CD8-positive, alpha-beta T cell (primary cell): ENCODE measurements at regions of chr1 and their contacts with region 1.

Region 1: GRCh38 chr1:158998781-158999161 is 10.9 kb upstream of the IFI16 start:
- DNase-seq: peak in 7 of 9 experiments; percentile 13 to 82 (median 38)
- ATAC-seq: peak; percentile 85
- H3K4me3 ChIP-seq: no peak overlapping the region
- H3K4me3 Mint-ChIP-seq: peak overlapping the region; percentile 54
- H3K27ac ChIP-seq: no peak overlapping the region
- H3K27ac Mint-ChIP-seq: peak overlapping the region; percentile 61
- H3K4me1 ChIP-seq: peaks cover 6% of the 10 kb centered on the region
- H3K4me1 Mint-ChIP-seq: peaks cover 30% of the 10 kb centered on the region
- H3K27me3 ChIP-seq: no peaks in the 10 kb centered on the region
- H3K27me3 Mint-ChIP-seq: no peaks in the 10 kb centered on the region
- CTCF ChIP-seq: peak; percentile 91

Region 2: GRCh38 chr1:157963713-157964112 is 1035.1 kb before region 1 on chr1:
- CTCF ChIA-PET with region 1: no interaction called
- POLR2A ChIA-PET with region 1: no interaction called
- intact Hi-C with region 1: loop called in 1 of 2 experiments (anchors 10 kb)
- DNase-seq: peak; percentile 2 to 69 (median 44)
- ATAC-seq: peak; percentile 40
- H3K4me3 ChIP-seq: no peak overlapping the region
- H3K4me3 Mint-ChIP-seq: no peak overlapping the region
- H3K27ac ChIP-seq: no peak overlapping the region
- H3K27ac Mint-ChIP-seq: no peak overlapping the region
- H3K4me1 ChIP-seq: no peaks in the 10 kb centered on the region
- H3K4me1 Mint-ChIP-seq: no peaks in the 10 kb centered on the region
- H3K27me3 ChIP-seq: peaks cover 2% of the 10 kb centered on the region in 2 experiments
- H3K27me3 Mint-ChIP-seq: peaks cover 27% of the 10 kb centered on the region
- CTCF ChIP-seq: peak; percentile 68

Region 3: DNA sequence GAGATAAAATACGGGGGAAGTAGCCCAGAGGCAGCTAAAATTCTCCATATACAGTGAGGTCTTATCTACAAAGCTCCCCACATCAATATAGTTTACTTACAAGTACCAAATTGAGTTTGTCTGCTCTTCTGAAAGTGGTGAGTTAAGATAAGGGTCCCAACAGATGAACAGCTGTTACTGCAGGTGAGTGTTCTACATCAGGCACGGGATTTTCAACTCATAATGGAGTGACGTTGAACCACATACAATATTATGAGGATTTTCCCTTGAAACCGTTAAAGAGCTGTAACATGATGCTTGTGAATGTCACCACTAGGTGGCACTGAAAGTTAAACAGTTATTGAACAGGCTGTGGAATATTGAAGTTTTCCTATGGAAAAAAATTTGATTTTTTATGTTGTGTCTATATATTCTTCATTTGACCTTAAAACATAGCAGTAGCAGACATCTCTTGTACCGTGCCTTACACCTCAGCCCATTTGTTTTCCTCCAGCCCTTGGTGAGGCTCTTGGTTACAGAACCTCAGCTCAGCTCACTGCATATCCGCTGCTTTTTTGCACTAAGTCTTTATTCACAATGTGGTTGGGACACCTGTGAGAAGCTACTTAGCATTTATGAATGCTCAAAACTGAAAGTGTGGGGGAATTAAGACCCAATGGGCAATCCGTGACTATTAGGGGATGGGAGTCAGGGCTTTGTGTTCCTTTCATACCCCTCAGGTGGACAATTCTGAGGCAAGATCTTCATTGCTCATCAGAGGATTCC is 794.9 kb before region 1 on chr1:
- CTCF ChIA-PET with region 1: interaction called, 21 read pairs
- POLR2A ChIA-PET with region 1: no interaction called
- intact Hi-C with region 1: loop called (anchors 1 kb)
- DNase-seq: peak in 2 of 9 experiments; percentile 57 to 71
- ATAC-seq: peak; percentile 64
- H3K4me3 ChIP-seq: no peak overlapping the region
- H3K4me3 Mint-ChIP-seq: no peak overlapping the region
- H3K27ac ChIP-seq: no peak overlapping the region
- H3K27ac Mint-ChIP-seq: no peak overlapping the region
- H3K4me1 ChIP-seq: peaks cover 4% of the 10 kb centered on the region
- H3K4me1 Mint-ChIP-seq: peaks cover 12% of the 10 kb centered on the region
- H3K27me3 ChIP-seq: no peaks in the 10 kb centered on the region
- H3K27me3 Mint-ChIP-seq: peaks cover 8% of the 10 kb centered on the region
- CTCF ChIP-seq: peak; percentile 97

Region 4: DNA sequence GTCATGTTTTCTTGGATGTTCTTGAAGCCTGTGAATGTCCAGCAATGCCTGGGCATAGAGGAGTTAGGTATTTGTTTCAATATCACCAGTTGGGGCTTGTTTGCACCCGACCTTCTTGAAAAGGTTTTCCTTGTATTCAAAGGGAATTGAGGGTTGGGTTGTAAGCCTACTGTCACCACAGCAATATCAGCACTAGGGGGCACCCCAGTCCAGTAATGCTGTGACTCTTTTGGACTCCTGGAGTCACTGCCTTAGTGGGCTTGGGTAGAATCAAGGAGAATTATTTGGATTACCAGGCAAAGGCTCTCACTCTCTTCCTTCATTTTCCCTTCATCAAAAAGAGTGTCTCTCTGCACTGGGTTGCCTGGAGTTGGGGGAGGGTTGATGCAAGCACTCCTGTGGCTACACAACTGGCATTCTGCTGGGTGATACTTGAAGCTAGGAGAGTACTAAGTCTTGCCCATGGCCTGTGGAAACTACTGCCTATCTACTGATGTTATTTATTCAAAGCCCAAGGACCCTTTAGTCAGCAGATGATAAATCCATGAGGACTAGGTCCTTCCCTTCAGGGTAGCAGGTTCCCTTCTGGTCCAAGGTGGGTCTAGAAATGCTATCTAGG is 492.3 kb before region 1 on chr1:
- CTCF ChIA-PET with region 1: no interaction called
- POLR2A ChIA-PET with region 1: no interaction called
- intact Hi-C with region 1: loop called in 1 of 2 experiments (anchors 5 kb)
- DNase-seq: peak in 6 of 9 experiments; percentile 2 to 53 (median 26)
- ATAC-seq: no peak
- H3K4me3 ChIP-seq: no peak overlapping the region
- H3K4me3 Mint-ChIP-seq: no peak overlapping the region
- H3K27ac ChIP-seq: no peak overlapping the region
- H3K27ac Mint-ChIP-seq: peak overlapping the region; percentile 20
- H3K4me1 ChIP-seq: no peaks in the 10 kb centered on the region
- H3K4me1 Mint-ChIP-seq: no peaks in the 10 kb centered on the region
- H3K27me3 ChIP-seq: peaks cover 0 to 1% of the 10 kb centered on the region in 2 experiments
- H3K27me3 Mint-ChIP-seq: peaks cover 14% of the 10 kb centered on the region
- CTCF ChIP-seq: peak; percentile 24

Region 5: GRCh38 chr1:158793604-158794003 is 205.2 kb before region 1 on chr1:
- CTCF ChIA-PET with region 1: interaction called, 20 read pairs
- POLR2A ChIA-PET with region 1: no interaction called
- intact Hi-C with region 1: loop called (anchors 1 to 2 kb)
- DNase-seq: peak in 5 of 9 experiments; percentile 7 to 61 (median 39)
- ATAC-seq: peak; percentile 38
- H3K4me3 ChIP-seq: no peak overlapping the region
- H3K4me3 Mint-ChIP-seq: no peak overlapping the region
- H3K27ac ChIP-seq: no peak overlapping the region
- H3K27ac Mint-ChIP-seq: no peak overlapping the region
- H3K4me1 ChIP-seq: no peaks in the 10 kb centered on the region
- H3K4me1 Mint-ChIP-seq: no peaks in the 10 kb centered on the region
- H3K27me3 ChIP-seq: no peaks in the 10 kb centered on the region
- H3K27me3 Mint-ChIP-seq: peaks cover 8% of the 10 kb centered on the region
- CTCF ChIP-seq: no peak

Region 6: GRCh38 chr1:159009704-159010361 is 11.1 kb after region 1 on chr1 and contains the start of gene IFI16:
- CTCF ChIA-PET with region 1: interaction called, 11 read pairs
- POLR2A ChIA-PET with region 1: interaction called, 8 read pairs
- intact Hi-C with region 1: loop called in 1 of 2 experiments (anchors 1 kb)
- DNase-seq: peak in 8 of 9 experiments; percentile 27 to 87 (median 57)
- ATAC-seq: peak; percentile 77
- H3K4me3 ChIP-seq: peak within 1 kb of the TSS; percentile 63 to 74
- H3K4me3 Mint-ChIP-seq: peak within 1 kb of the TSS; percentile 90
- H3K27ac ChIP-seq: peak within 1 kb of the TSS; percentile 56 to 80
- H3K27ac Mint-ChIP-seq: peak within 1 kb of the TSS; percentile 93
- H3K4me1 ChIP-seq: peaks cover 36% of the 10 kb centered on the region
- H3K4me1 Mint-ChIP-seq: peaks cover 56% of the 10 kb centered on the region
- H3K27me3 ChIP-seq: no peaks in the 10 kb centered on the region
- H3K27me3 Mint-ChIP-seq: no peaks in the 10 kb centered on the region
- CTCF ChIP-seq: no peak
- total RNA-seq, gene IFI16: 26.1 to 32.1 TPM

Region 7: GRCh38 chr1:159015440-159015909 is 16.7 kb after region 1 on chr1:
- CTCF ChIA-PET with region 1: interaction called, 5 read pairs
- POLR2A ChIA-PET with region 1: interaction called, 3 read pairs
- intact Hi-C with region 1: loop called in 1 of 2 experiments (anchors 2 kb)
- DNase-seq: peak; percentile 16 to 85 (median 69)
- ATAC-seq: peak; percentile 92
- H3K4me3 ChIP-seq: no peak overlapping the region
- H3K4me3 Mint-ChIP-seq: peak overlapping the region; percentile 72
- H3K27ac ChIP-seq: peak overlapping the region in 1 of 2 experiments; percentile 73
- H3K27ac Mint-ChIP-seq: peak overlapping the region; percentile 84
- H3K4me1 ChIP-seq: peaks cover 42% of the 10 kb centered on the region
- H3K4me1 Mint-ChIP-seq: peaks cover 75% of the 10 kb centered on the region
- H3K27me3 ChIP-seq: no peaks in the 10 kb centered on the region
- H3K27me3 Mint-ChIP-seq: no peaks in the 10 kb centered on the region
- CTCF ChIP-seq: no peak